ENCODE measurements at regions of chr5 and their contacts with region 1.

Region 1: DNA sequence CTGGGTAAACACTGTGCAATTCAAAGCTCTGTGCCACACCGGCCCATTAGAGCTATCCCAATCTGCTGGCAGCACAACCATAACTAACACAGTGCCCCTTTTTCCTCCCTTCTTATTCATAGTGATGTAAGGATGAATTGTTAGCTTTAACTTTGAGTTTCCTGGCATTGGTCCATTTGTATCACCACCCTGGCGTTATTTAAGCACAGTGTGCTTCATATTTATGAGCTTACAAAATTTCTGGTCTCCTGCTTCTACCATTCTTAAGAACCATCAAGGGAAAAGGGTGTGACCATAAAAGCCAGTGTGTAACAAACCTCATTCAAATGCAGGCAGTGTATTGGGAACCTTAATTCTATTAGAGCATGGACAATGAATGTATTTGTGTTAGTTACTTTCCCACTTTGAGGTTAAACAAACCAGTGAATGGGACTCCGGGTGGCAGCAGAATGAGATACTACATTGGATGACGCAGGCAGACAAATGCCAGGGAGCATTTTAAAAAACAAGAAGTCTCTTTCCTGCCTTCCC is 222.6 kb downstream of the TMEM161B start:
- DNase-seq: peak in 3 of 10 donors; percentile 9 to 50 (median 32)
- H3K4me3 ChIP-seq: peak overlapping the region in 2 of 59 donors; percentile 5 to 9
- H3K27ac ChIP-seq: peak overlapping the region in 55 of 59 donors; percentile 6 to 87 (median 74)
- H3K27me3 ChIP-seq: no peaks in the 10 kb centered on the region
- CTCF ChIP-seq: no peak

Region 2: GRCh38 chr5:87949676-87950631 is 96.0 kb before region 1 on chr5:
- intact Hi-C with region 1: loop called (anchors 5 kb)
- DNase-seq: peak in 7 of 10 donors; percentile 30 to 74 (median 54)
- H3K4me3 ChIP-seq: peak overlapping the region in 20 of 59 donors; percentile 1 to 52 (median 19)
- H3K27ac ChIP-seq: peak overlapping the region; percentile 28 to 93 (median 86)
- H3K27me3 ChIP-seq: no peaks in the 10 kb centered on the region
- CTCF ChIP-seq: peak in 7 of 56 donors; percentile 6 to 20 (median 13)

Region 3: DNA sequence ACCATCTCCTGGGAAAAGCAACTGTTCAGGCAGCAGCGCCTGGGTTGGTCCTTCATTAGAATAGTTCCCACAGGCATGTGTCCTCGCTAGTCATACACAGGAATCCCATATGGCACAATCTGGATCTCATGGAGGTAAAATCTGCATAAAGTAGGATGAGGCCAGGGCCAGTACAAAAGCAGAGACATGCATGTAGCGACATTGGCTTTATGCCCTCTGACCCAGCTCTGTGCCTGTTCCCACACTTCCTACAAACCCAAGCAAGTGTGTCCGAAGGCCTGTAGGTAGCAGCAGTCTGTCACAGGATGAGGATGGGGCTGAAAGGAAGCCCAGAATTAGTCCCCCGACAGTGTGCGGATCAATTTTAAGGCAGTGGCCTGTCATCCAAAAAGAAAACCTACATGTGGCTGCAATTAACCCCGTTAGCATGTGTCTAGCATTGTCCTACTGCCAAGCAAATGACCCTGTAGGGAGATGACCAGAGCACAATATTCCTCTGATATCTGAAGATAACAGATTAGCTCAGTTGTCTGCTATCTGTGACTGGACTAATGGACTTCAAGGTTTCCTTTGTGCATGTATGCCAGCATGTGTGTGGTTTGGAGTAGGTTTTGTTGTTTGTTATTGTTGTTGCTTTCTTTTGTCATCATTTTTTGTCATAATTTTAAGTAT is 43.9 kb after region 1 on chr5:
- intact Hi-C with region 1: loop called in 1 of 2 experiments (anchors 5 kb)
- DNase-seq: no peak
- H3K4me3 ChIP-seq: no peak overlapping the region
- H3K27ac ChIP-seq: peak overlapping the region in 16 of 59 donors; percentile 4 to 66 (median 22)
- H3K27me3 ChIP-seq: no peaks in the 10 kb centered on the region
- CTCF ChIP-seq: no peak

Measured in dorsolateral prefrontal cortex (tissue), 120 donors.